ENCODE measurements at regions of chrX and their contacts with region 1.

Region 1: GRCh38 chrX:17689971-17690409 is 47.3 kb upstream of the SCML1 start:
- DNase-seq: peak; percentile 7
- ATAC-seq: peak; percentile 94
- H3K4me3 ChIP-seq: no peak overlapping the region
- H3K27ac ChIP-seq: no peak overlapping the region
- H3K4me1 ChIP-seq: no peaks in the 10 kb centered on the region
- H3K27me3 ChIP-seq: no peaks in the 10 kb centered on the region
- CTCF ChIP-seq: peak; percentile 50 to 74 (median 62); a peak in 5 of 6 replicates
- EP300 ChIP-seq: no peak
- POLR2A ChIP-seq: no peak
- RAD21 ChIP-seq: peak; percentile 62

Region 2: GRCh38 chrX:16826207-16826606 is 863.8 kb before region 1 on chrX:
- CTCF ChIA-PET with region 1: no interaction called
- POLR2A ChIA-PET with region 1: no interaction called
- RAD21 ChIA-PET with region 1: interaction called, 4 read pairs
- SMC1A ChIA-PET with region 1: no interaction called
- in situ Hi-C with region 1: loop called (anchors 10 kb)
- intact Hi-C with region 1: no loop called
- DNase-seq: no peak
- ATAC-seq: peak; percentile 76
- H3K4me3 ChIP-seq: no peak overlapping the region
- H3K27ac ChIP-seq: no peak overlapping the region
- H3K4me1 ChIP-seq: no peaks in the 10 kb centered on the region
- H3K27me3 ChIP-seq: no peaks in the 10 kb centered on the region
- CTCF ChIP-seq: peak; percentile 37 to 68 (median 60); a peak in 5 of 6 replicates
- EP300 ChIP-seq: no peak
- POLR2A ChIP-seq: no peak
- RAD21 ChIP-seq: peak; percentile 65

Region 3: GRCh38 chrX:17120816-17121215 is 569.2 kb before region 1 on chrX:
- CTCF ChIA-PET with region 1: interaction called, 3 read pairs
- POLR2A ChIA-PET with region 1: no interaction called
- RAD21 ChIA-PET with region 1: no interaction called
- SMC1A ChIA-PET with region 1: no interaction called
- in situ Hi-C with region 1: no loop called
- intact Hi-C with region 1: loop called (anchors 2 kb)
- DNase-seq: no peak
- ATAC-seq: no peak
- H3K4me3 ChIP-seq: no peak overlapping the region
- H3K27ac ChIP-seq: no peak overlapping the region
- H3K4me1 ChIP-seq: no peaks in the 10 kb centered on the region
- H3K27me3 ChIP-seq: no peaks in the 10 kb centered on the region
- CTCF ChIP-seq: no peak
- EP300 ChIP-seq: no peak
- POLR2A ChIP-seq: no peak
- RAD21 ChIP-seq: no peak

Region 4: GRCh38 chrX:17242470-17242869 is 447.5 kb before region 1 on chrX:
- CTCF ChIA-PET with region 1: interaction called, 4 read pairs
- POLR2A ChIA-PET with region 1: no interaction called
- RAD21 ChIA-PET with region 1: interaction called, 3 read pairs
- SMC1A ChIA-PET with region 1: interaction called, 3 read pairs
- in situ Hi-C with region 1: loop called (anchors 25 kb)
- intact Hi-C with region 1: loop called (anchors 1 kb)
- DNase-seq: no peak
- ATAC-seq: peak; percentile 81
- H3K4me3 ChIP-seq: no peak overlapping the region
- H3K27ac ChIP-seq: no peak overlapping the region
- H3K4me1 ChIP-seq: no peaks in the 10 kb centered on the region
- H3K27me3 ChIP-seq: no peaks in the 10 kb centered on the region
- CTCF ChIP-seq: peak; percentile 68 to 74 (median 72)
- EP300 ChIP-seq: no peak
- POLR2A ChIP-seq: no peak
- RAD21 ChIP-seq: peak; percentile 66

Region 5: DNA sequence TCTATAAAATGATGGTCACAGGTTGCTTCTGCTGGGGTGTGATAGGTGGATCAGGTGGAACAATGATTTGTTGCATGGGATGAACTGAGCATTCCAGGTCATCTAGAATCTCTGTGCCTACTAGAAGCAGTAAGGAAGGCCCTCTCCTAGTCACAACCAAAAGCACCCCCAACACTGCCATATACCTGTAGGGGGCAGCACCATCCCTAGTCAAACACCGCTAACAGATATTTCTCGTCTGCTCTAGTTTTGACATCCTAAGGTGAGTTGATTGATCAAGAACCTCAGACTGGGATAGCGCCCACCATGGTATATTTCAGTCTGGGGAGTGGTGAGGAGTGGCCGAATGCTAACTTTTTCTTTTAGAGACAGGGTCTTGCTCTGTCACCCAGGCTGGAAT is 154.8 kb before region 1 on chrX:
- CTCF ChIA-PET with region 1: interaction called, 3 read pairs
- POLR2A ChIA-PET with region 1: no interaction called
- RAD21 ChIA-PET with region 1: no interaction called
- SMC1A ChIA-PET with region 1: interaction called, 3 read pairs
- in situ Hi-C with region 1: no loop called
- intact Hi-C with region 1: loop called (anchors 1 kb)
- DNase-seq: no peak
- ATAC-seq: peak; percentile 80
- H3K4me3 ChIP-seq: no peak overlapping the region
- H3K27ac ChIP-seq: no peak overlapping the region
- H3K4me1 ChIP-seq: no peaks in the 10 kb centered on the region
- H3K27me3 ChIP-seq: no peaks in the 10 kb centered on the region
- CTCF ChIP-seq: peak; percentile 44 to 53 (median 48); a peak in 5 of 6 replicates
- EP300 ChIP-seq: no peak
- POLR2A ChIP-seq: no peak
- RAD21 ChIP-seq: peak; percentile 62

Region 6: DNA sequence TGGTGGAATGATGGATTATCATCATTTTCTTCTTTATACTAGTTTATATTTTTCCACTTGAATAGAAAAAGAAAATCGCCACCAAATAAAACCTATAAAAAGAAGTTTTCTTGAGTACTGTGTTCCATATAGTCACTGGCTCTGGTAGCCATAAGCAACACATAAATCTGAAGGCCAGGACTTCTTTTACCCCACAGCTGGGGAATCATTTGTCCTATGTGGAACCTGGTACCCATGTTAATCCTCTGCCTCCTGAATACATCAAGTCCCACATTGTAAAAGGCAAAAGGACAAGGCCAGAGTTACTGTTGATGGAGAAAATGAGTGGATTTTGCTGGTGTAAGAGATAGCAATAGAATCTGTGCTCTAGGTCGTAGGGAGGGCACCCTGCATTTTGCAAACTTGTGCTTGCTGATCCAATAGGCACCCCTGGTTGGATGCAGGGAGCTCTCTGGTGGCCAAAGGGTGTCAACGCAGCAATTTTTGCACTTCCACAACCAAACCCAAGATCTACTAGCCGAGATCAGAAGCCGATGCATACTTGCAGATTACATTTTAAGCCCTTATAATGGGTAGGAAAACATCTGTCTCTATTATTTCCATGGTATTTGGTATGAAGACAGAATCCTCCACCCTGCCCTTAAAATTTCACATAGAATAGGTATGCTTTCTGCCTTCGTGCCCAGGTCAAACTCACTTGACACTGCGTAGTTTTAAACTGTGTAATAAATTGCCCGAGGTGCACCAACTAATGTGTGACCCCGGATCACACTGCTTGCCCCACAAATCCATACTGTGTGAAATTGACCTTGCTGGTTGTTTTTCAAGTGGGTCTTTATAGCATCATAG is 98.9 kb before region 1 on chrX:
- CTCF ChIA-PET with region 1: no interaction called
- POLR2A ChIA-PET with region 1: no interaction called
- RAD21 ChIA-PET with region 1: no interaction called
- SMC1A ChIA-PET with region 1: interaction called, 3 read pairs
- in situ Hi-C with region 1: no loop called
- intact Hi-C with region 1: loop called (anchors 2 kb)
- DNase-seq: no peak
- ATAC-seq: peak; percentile 90
- H3K4me3 ChIP-seq: no peak overlapping the region
- H3K27ac ChIP-seq: no peak overlapping the region
- H3K4me1 ChIP-seq: no peaks in the 10 kb centered on the region
- H3K27me3 ChIP-seq: no peaks in the 10 kb centered on the region
- CTCF ChIP-seq: peak; percentile 70 to 74 (median 72)
- EP300 ChIP-seq: no peak
- POLR2A ChIP-seq: no peak
- RAD21 ChIP-seq: peak; percentile 70

Region 7: DNA sequence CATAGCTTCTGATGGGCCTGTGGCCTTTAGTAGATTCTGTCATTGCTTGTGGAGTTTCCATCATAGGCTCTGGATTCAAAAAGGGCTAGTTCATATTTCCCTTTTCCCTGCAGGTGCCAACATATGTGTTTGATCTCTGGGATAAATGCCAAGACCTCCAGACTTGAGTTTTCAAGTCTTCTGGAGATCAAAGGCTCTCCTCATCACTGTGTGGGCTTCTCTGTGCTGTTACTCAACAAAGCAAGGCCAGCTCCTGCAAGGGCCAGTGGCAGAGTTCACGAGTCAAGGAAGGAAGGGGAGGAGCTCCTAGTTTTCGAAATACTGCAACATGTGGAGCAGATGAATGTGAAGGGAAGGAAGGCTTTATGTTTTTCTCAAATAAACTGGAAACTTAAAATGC is 15.4 kb before region 1 on chrX:
- CTCF ChIA-PET with region 1: no interaction called
- POLR2A ChIA-PET with region 1: no interaction called
- RAD21 ChIA-PET with region 1: no interaction called
- SMC1A ChIA-PET with region 1: no interaction called
- in situ Hi-C with region 1: no loop called
- intact Hi-C with region 1: no loop called
- DNase-seq: no peak
- ATAC-seq: no peak
- H3K4me3 ChIP-seq: no peak overlapping the region
- H3K27ac ChIP-seq: no peak overlapping the region
- H3K4me1 ChIP-seq: no peaks in the 10 kb centered on the region
- H3K27me3 ChIP-seq: no peaks in the 10 kb centered on the region; a peak in 1 of 4 replicates
- CTCF ChIP-seq: no peak
- EP300 ChIP-seq: no peak
- POLR2A ChIP-seq: no peak
- RAD21 ChIP-seq: no peak

Measured in GM12878 (cell line).